ENCODE measurements at regions of chr18 and their contacts with region 1.

Region 1: GRCh38 chr18:8948471-8949149 is 153.9 kb upstream of the NDUFV2 start:
- DNase-seq: peak; percentile 93
- ATAC-seq: peak; percentile 81
- H3K4me3 ChIP-seq: no peak overlapping the region
- H3K27ac ChIP-seq: peak overlapping the region; percentile 95
- H3K4me1 ChIP-seq: peaks cover 32% of the 10 kb centered on the region
- H3K27me3 ChIP-seq: no peaks in the 10 kb centered on the region
- CTCF ChIP-seq: no peak
- POLR2A ChIP-seq: no peak
- RAD21 ChIP-seq: peak; percentile 12; the same call in 1 of the 2 replicates

Region 2: GRCh38 chr18:8858888-8859511 is 89.6 kb before region 1 on chr18:
- CTCF ChIA-PET with region 1: interaction called, 3 read pairs
- POLR2A ChIA-PET with region 1: interaction called, 8 read pairs
- dilution Hi-C with region 1: no loop called
- in situ Hi-C with region 1: no loop called
- intact Hi-C with region 1: loop called (anchors 5 kb)
- DNase-seq: peak; percentile 99
- ATAC-seq: peak; percentile 89
- H3K4me3 ChIP-seq: no peak overlapping the region
- H3K27ac ChIP-seq: peak overlapping the region; percentile 34; the same call in 1 of the 2 replicates
- H3K4me1 ChIP-seq: peaks cover 17% of the 10 kb centered on the region
- H3K27me3 ChIP-seq: no peaks in the 10 kb centered on the region
- CTCF ChIP-seq: no peak
- POLR2A ChIP-seq: no peak
- RAD21 ChIP-seq: peak; percentile 12; the same call in 1 of the 2 replicates